H1 (cell line): ENCODE measurements at regions of chr11 and their contacts with region 1.

Region 1: DNA sequence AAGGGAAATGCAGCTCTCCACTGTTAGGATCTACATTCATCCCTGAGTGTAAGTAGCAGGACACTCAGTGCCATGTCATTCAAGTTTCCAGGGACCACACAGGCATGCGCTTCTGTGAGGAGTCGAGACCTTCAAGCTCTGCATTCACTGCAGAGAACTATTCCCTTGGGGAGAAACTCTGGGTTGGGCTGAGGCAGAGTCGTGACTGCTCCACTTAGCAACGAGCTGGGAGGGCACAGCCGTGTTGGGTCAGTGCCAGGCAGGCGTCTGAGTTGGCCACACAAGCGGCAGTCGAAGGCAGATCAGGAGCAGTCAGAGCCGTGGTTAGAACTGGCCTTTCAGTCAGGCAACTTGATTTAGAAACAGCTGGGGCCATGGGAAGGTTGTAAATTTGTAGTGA is 14.7 kb downstream of the MPEG1 start:
- DNase-seq: no peak
- H3K4me3 ChIP-seq: no peak overlapping the region
- H3K27ac ChIP-seq: no peak overlapping the region
- H3K4me1 ChIP-seq: no peaks in the 10 kb centered on the region; a peak in 1 of 7 replicates
- H3K27me3 ChIP-seq: no peaks in the 10 kb centered on the region
- CTCF ChIP-seq: no peak
- EP300 ChIP-seq: no peak
- POLR2A ChIP-seq: no peak
- RAD21 ChIP-seq: no peak

Region 2: DNA sequence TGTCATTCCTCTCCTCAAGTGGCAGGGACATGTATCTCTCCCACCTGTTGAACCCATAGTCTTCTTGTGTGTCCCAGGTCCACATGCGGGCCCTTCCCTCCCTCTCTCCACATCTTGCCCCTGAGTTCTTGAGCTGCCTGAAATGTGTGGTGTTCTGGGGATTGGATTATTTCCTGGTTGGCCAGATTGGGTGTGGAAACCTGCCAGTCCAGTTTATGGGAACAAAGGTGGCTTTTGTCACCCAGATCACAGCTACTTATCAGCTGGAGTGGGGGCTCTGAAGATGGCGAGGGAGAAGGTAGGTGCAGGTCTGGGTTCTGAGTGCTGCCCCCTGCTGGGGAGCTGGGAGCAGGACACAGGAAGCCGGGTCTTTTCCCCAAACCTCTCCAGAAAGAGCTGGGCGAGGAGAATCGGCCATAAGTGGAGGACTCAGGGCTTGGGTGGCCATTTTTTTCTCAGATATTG is 11.8 kb before region 1 on chr11:
- CTCF ChIA-PET with region 1: interaction called, 141 read pairs
- POLR2A ChIA-PET with region 1: interaction called, 3 read pairs
- DNase-seq: peak in 1 of 2 experiments; percentile 82
- H3K4me3 ChIP-seq: no peak overlapping the region
- H3K27ac ChIP-seq: no peak overlapping the region
- H3K4me1 ChIP-seq: peaks cover 0 to 4% (median 0%) of the 10 kb centered on the region in 4 experiments; a peak in 2 of 7 replicates
- H3K27me3 ChIP-seq: no peaks in the 10 kb centered on the region
- CTCF ChIP-seq: peak; percentile 65 to 73 (median 72)
- EP300 ChIP-seq: no peak
- POLR2A ChIP-seq: no peak
- RAD21 ChIP-seq: peak; percentile 33 to 39; a peak in 3 of 4 replicates

Region 3: DNA sequence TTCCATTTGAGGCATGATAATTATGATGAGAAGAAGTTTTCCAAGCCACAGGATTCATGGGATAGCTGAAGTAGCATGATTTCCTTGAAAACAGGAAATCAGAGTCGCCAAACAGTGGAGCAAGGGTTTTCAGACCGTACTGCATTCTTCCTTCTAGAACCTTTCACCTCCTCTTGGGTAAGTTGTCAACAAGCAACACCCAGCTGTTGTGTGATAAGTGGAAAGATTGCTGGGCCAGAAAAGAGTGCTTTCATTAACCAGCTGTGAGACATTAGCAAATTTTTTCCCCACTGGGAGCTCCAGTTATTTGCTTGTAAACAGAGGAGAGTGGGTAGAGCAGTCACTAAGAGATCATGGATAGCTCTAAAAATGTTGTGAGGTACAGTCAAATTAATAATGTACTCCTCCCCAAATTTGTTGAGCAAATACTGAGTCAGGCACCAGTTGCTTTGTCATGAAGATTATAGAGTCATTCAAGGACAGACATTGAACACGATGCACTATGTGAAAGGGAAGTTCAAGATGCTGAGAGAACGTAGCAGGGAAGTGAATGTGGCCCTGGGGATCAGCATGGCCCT is 26.4 kb after region 1 on chr11:
- CTCF ChIA-PET with region 1: interaction called, 25 read pairs
- POLR2A ChIA-PET with region 1: no interaction called
- DNase-seq: no peak
- H3K4me3 ChIP-seq: no peak overlapping the region
- H3K27ac ChIP-seq: no peak overlapping the region
- H3K4me1 ChIP-seq: no peaks in the 10 kb centered on the region
- H3K27me3 ChIP-seq: no peaks in the 10 kb centered on the region
- CTCF ChIP-seq: no peak
- EP300 ChIP-seq: no peak
- POLR2A ChIP-seq: no peak
- RAD21 ChIP-seq: no peak

Region 4: GRCh38 chr11:59429924-59430516 is 232.0 kb after region 1 on chr11:
- CTCF ChIA-PET with region 1: interaction called, 13 read pairs
- POLR2A ChIA-PET with region 1: no interaction called
- DNase-seq: peak in 1 of 2 experiments; percentile 48
- H3K4me3 ChIP-seq: no peak overlapping the region
- H3K27ac ChIP-seq: no peak overlapping the region
- H3K4me1 ChIP-seq: peaks cover 3 to 5% (median 4%) of the 10 kb centered on the region in 4 experiments; a peak in 6 of 7 replicates
- H3K27me3 ChIP-seq: no peaks in the 10 kb centered on the region
- CTCF ChIP-seq: peak in 2 of 3 experiments; percentile 66 to 84; a peak in 2 of 4 replicates
- EP300 ChIP-seq: no peak
- POLR2A ChIP-seq: no peak
- RAD21 ChIP-seq: peak; percentile 92